MCF 10A (cell line): ENCODE measurements at regions of chr1 and their contacts with region 1.

Region 1: DNA sequence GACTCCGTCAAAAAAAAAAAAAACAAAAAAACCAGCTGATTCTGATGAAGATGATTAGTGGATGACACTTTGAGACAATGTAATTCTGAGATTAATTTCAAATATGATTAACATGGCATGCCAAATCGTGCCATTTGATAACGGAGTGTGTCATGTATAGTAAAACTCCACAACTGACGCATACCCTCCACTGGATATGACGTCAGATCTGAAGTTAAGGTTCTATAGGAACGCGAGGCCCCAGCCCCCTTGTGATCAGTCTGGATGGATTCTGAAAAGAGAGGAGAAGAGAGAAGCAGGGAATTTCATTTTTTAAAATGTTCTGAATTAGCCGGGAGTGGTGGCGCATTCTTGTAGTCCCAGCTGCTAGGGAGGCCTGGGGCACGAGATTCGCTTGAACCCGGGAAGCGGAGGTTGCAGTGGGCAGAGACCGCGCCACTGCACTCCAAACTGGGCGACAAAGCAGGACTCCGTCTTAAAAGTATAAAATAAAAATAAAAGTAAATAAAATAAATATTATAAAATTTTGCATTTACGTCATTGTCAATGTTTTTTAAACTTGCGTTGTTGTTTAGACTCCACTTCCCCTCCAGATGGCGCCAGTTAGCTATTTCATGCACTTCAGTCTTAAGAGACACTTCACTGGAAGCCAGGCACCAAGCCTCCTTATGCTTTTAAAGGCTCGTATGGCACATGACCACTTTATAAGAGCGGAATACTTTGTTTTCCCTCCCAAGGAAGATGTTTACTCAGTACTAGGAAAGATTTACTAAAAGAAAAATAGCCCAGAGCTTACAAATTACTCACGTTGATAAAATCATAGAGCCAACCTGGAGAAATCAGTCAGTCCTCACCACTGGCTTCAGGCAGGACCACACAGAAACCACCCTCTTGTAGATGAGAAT is 65.5 kb downstream of the UBE2U start:
- DNase-seq: peak; percentile 84
- H3K4me3 Mint-ChIP-seq: no peak overlapping the region
- H3K27ac Mint-ChIP-seq: no peak overlapping the region
- H3K4me1 Mint-ChIP-seq: peaks cover 3% of the 10 kb centered on the region
- H3K27me3 Mint-ChIP-seq: no peaks in the 10 kb centered on the region
- CTCF ChIP-seq: peak; percentile 87

Region 2: DNA sequence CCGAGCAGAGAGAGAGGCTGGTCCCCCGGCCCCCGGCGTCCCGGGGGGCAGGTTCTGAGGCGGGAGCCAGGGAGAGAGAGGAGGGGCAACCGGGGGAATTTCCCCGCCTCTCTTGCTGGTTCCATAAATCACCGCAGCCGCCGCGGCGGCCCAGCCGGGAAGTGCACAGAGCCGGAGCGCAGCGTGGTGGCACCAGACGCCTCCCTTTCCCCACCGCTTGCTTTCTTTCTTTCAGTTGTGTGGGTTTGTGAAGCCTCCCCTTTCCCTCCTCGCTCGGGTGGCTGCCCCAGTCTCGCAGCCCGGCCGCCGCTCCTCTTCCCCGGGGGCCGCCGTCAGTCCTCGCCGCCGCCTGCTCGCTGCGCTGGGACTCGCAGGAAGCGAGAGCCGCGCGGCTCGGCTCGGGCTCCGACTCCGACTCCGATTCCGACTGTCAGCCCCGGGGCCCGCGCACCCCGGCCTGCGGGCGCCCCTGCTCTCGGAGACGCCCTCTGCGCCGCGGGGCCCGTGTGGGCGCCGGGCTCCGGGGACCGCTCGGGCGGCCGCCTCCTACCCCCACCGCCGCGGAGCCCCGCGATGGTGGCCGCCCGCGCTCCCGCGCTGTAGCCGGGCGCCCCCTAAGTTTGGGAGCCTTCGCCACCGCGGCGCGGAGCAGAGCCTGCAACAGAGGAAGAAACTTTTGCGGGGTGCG is 201.2 kb after region 1 on chr1 and contains the start of gene CACHD1:
- CTCF ChIA-PET with region 1: interaction called, 7 read pairs
- POLR2A ChIA-PET with region 1: interaction called, 3 read pairs
- intact Hi-C with region 1: loop called (anchors 1 kb)
- DNase-seq: peak; percentile 76
- H3K4me3 Mint-ChIP-seq: peak within 1 kb of the TSS; percentile 83
- H3K27ac Mint-ChIP-seq: peak within 1 kb of the TSS; percentile 37
- H3K4me1 Mint-ChIP-seq: peaks cover 28% of the 10 kb centered on the region
- H3K27me3 Mint-ChIP-seq: peaks cover 8% of the 10 kb centered on the region
- CTCF ChIP-seq: peak; percentile 24
- total RNA-seq, gene CACHD1: 2.9 and 3.9 TPM in 2 replicates

Region 3: DNA sequence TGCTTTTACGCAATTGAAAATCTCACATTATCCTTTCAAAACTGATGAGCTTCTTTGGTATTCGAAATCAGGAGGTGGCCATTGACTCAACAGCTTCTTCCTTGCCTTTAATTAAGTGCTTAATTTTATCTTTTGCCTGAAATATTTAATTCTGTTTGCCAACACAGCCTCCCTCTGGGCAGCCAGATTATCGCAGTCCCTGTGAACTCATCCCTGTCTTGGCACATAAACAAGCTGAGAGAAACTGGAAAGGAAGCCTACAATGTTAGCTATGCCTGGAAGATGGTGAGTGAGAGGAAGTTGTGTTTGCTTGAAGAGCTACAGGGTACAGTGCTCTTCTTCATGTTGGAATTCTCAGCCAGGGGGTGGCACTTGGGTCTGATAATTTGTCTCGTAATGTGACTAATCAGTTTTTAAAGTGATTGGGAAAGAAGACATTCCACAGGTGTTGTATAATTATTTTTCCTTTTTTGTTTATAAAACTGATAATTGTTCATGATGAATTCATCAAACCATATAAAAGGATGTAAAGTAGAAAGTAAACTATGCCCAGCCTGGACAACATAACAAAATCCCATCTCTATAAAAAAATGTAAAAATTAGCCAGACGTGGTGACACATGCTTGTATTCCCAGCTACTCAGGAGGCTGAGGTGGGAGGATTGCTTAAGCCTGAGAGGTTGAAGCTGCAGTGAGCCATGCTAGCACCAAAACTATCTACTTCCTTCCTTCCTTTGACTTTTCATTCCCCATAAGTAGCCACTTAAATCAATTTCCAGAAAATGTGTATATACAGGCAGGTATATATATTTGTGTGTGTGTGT is 385.8 kb after region 1 on chr1:
- CTCF ChIA-PET with region 1: interaction called, 4 read pairs
- POLR2A ChIA-PET with region 1: interaction called, 3 read pairs
- intact Hi-C with region 1: loop called (anchors 1 kb)
- DNase-seq: peak; percentile 27
- H3K4me3 Mint-ChIP-seq: no peak overlapping the region
- H3K27ac Mint-ChIP-seq: no peak overlapping the region
- H3K4me1 Mint-ChIP-seq: no peaks in the 10 kb centered on the region
- H3K27me3 Mint-ChIP-seq: no peaks in the 10 kb centered on the region
- CTCF ChIP-seq: no peak

Region 4: GRCh38 chr1:64744492-64745180 is 475.7 kb after region 1 on chr1 and contains the start of gene RAVER2:
- CTCF ChIA-PET with region 1: no interaction called
- POLR2A ChIA-PET with region 1: interaction called, 4 read pairs
- intact Hi-C with region 1: loop called (anchors 2 kb)
- DNase-seq: peak; percentile 79
- H3K4me3 Mint-ChIP-seq: peak within 1 kb of the TSS; percentile 80
- H3K27ac Mint-ChIP-seq: peak within 1 kb of the TSS; percentile 31
- H3K4me1 Mint-ChIP-seq: peaks cover 21% of the 10 kb centered on the region
- H3K27me3 Mint-ChIP-seq: no peaks in the 10 kb centered on the region
- CTCF ChIP-seq: peak; percentile 53
- total RNA-seq, gene RAVER2: 5.3 and 5.9 TPM in 2 replicates